ENCODE measurements at regions of chr1 and their contacts with region 1.

Region 1: DNA sequence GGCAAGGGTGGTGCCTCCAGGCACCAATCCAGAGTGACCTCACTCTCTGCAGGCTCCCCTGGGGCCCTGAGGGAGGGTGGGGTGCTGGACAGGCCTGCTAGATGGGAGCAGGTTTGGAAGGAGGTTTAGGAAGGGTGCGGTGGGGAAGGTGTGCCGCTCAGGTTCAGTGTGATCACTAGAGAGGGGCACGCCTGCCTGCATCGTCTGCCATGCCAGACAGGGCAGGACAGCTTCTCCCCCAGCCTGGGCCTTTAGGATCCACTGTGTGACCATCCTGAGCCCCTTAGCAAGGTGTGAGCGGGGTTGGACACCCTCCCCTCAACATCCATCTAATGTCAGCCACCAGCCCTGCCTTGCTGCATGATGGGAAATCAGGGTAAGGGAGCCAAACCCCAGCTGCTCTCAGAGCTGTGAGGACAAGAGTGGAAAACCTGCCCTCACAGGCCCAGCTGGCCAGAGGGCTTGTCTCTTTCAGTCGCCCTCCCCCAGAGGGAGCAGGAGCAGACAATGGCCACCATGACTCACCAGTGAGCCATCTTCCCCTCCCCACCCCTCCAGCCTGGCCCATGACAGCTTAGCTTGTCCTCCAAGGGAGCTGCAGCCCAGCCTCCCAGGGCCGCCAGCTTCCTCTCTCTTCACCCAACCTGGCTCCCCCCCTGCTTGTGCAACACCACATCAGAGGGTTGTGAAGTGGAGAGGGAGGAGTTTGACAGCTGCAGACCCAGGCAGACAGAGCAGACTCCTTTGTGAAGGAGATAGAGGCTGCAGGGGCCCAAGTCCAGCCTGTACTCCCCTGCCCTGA is 37.0 kb downstream of the NUAK2 start:
- H3K4me3 Mint-ChIP-seq: no peak overlapping the region
- H3K27ac Mint-ChIP-seq: peak overlapping the region; percentile 92
- H3K4me1 Mint-ChIP-seq: peaks cover 73% of the 10 kb centered on the region
- H3K27me3 Mint-ChIP-seq: peaks cover 2% of the 10 kb centered on the region

Region 2: DNA sequence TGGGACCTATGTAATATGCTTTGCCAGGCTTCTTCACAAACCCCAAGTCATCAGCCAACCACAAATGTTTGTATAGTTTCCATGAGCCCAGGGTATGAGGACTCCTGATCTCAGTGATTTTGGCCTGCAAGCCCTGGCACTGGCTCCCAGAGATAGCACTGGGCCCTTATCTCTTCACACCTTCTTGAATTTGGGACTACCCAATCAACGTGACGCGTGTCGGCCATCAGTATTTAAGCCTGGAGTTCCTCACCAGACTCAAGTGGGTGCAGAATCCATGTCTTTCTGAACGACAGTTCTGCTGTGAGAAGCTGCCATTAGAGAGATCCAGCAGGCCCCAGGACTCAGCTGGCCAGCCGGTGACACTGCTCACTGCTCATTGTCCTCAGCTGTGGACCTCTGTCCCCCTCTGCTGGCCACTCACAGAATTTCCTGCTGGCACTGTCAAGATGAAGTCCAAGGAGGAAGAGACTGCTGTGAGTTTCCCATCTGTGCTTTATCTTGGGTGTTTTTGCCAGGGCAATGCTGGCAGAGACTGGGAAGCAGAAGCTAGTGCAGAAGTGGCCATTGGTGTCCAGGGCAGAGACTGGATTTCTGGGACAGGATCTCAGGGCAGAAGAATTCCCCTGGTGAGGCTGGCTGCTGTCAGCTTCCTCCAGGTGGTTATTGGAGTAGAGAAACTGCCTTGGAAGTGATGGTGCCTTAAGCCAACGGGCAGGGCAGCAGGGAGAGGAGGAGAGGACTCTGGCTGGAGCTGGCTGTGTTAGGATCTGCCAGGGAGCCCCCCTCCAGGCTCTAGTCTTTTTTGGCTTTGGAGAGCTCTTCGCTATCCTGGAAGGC is 28.4 kb before region 1 on chr1:
- intact Hi-C with region 1: no loop called
- H3K4me3 Mint-ChIP-seq: no peak overlapping the region
- H3K27ac Mint-ChIP-seq: peak overlapping the region; percentile 65
- H3K4me1 Mint-ChIP-seq: peaks cover 95% of the 10 kb centered on the region
- H3K27me3 Mint-ChIP-seq: peaks cover 6% of the 10 kb centered on the region

Region 3: DNA sequence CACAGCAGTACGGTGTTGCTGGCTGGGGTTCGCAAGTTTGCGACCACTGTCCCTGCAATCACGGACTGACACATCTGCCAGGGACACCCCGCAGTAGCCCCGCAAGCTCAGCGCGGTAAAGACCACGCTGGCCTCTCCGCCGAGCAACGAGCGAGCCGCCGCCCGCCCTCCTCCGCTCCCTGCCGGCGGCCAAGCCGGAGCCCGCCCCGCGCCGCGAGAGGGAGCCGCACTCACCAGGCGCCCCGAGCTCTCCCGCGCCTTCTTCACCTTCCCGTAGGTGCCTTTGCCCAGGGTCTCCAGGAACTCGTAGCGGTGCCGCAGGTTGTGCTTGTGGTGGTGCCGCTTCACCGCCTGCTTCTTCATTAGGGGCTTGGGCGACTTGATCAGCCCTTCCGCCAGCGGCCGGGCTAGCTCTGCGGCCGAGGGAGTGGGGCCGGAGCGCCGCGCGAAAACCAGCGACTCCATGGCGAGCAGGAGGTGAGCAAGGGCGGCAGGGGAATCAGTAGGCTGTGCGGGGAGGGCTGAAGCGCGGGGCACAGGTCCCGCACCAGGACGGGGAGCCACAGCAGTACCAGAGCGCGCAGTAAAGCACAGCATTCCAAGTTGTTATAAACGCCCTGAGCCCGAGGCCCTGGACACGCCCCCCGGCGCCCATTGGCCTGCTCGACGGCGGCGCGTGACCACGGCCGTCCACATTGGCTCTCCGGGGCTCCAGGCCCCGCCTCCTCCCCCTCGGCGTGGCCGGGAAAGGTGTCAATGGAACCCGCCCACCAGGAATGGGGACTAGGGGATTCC is 36.8 kb after region 1 on chr1 and contains the start of gene NUAK2:
- intact Hi-C with region 1: loop called (anchors 5 kb)
- H3K4me3 Mint-ChIP-seq: peak within 1 kb of the TSS; percentile 90
- H3K27ac Mint-ChIP-seq: peak within 1 kb of the TSS; percentile 91
- H3K4me1 Mint-ChIP-seq: peaks cover 62% of the 10 kb centered on the region
- H3K27me3 Mint-ChIP-seq: peaks cover 8% of the 10 kb centered on the region